ENCODE measurements at regions of chr1 and their contacts with region 1.

Region 1: DNA sequence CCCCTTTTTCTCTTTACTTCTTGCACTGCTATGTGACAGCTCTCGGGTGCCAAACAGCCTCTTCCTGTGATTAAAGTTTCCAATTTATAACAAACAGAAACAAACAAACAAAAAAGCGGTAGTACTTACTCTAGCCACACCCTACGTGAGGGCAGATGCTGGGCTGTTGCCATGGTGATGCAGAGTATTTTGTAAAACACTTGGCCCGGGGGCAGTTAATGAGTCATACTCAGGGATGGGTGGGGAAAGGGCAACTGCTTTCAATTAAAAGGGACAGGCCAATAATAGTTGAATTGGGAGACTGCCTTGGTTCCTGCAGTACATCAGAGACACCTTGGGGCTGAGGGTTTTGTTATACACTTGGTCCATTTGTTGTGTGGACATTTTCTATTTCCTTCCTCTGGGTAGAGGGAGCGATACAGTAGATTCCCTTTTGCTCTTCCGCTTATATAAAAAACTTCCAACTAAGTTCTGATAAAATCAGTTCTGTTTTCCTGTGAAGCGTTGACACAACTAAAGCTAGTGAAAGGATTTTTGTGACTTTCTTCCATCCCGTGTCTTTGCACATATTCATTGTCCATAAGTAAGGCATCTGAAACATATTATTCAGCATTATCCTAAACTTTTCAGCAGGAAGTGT is 36.5 kb upstream of the THEM4 start:
- DNase-seq: peak; percentile 88
- H3K4me3 Mint-ChIP-seq: peak overlapping the region; percentile 60
- H3K27ac Mint-ChIP-seq: peak overlapping the region; percentile 87
- H3K4me1 Mint-ChIP-seq: peaks cover 54% of the 10 kb centered on the region
- H3K27me3 Mint-ChIP-seq: no peaks in the 10 kb centered on the region

Region 2: GRCh38 chr1:151611832-151612500 is 333.9 kb before region 1 on chr1 and contains the start of gene SNX27:
- CTCF ChIA-PET with region 1: no interaction called
- POLR2A ChIA-PET with region 1: no interaction called
- intact Hi-C with region 1: loop called (anchors 10 kb)
- DNase-seq: peak; percentile 93
- H3K4me3 Mint-ChIP-seq: peak within 1 kb of the TSS; percentile 94
- H3K27ac Mint-ChIP-seq: peak within 1 kb of the TSS; percentile 79
- H3K4me1 Mint-ChIP-seq: peaks cover 49% of the 10 kb centered on the region
- H3K27me3 Mint-ChIP-seq: peaks cover 1% of the 10 kb centered on the region
- total RNA-seq, gene SNX27: 27.1 to 30.7 TPM

Region 3: GRCh38 chr1:151968058-151968457 is 22.2 kb after region 1 on chr1:
- CTCF ChIA-PET with region 1: interaction called, 13 read pairs
- POLR2A ChIA-PET with region 1: interaction called, 4 read pairs
- intact Hi-C with region 1: loop called (anchors 1 kb)
- DNase-seq: peak; percentile 55
- H3K4me3 Mint-ChIP-seq: no peak overlapping the region
- H3K27ac Mint-ChIP-seq: no peak overlapping the region
- H3K4me1 Mint-ChIP-seq: peaks cover 19% of the 10 kb centered on the region
- H3K27me3 Mint-ChIP-seq: no peaks in the 10 kb centered on the region

Region 4: DNA sequence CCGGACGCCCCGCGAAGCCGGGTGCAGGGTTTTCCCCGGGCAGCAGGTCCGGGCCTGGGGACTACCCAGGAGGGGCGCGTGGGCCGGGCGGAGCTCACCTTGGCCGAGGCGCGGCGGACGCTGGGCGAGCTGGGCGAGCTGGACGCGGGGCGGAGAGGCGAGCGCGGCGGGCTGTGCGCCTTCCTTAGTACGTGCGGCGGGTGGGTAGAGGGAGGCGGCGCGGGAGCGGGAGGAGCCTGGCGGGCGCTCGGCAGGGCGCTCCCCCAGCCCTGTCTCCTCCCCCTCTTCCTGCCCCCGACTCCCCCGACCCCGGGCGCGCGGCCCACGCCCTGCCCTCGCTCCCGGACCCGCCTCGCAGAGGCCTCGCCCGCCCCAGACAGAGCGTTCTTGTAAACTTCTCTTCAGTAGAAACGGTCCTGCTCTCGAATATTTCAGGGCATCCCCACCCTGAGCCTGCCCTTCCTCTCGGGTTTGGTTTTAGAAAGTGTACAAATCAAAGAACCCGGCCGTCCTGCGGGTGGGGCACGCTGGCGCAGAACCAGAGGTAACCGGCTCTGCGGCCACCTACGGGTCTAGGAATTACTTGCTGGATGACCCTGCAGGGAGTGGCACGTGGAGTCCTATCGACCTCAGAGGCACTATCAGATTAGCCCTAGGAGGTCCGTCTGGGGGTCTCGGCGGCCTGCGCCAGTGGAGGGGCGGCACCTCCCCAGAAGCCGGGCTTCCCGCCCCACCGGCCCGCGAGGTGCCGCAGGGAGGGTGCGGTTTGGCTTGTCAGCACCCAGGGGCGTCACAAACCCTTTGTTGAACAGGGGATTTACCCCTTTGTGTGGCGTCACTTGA is 48.0 kb after region 1 on chr1 and contains the start of gene S100A10:
- CTCF ChIA-PET with region 1: interaction called, 377 read pairs
- POLR2A ChIA-PET with region 1: interaction called, 12 read pairs
- intact Hi-C with region 1: no loop called
- DNase-seq: peak; percentile 83
- H3K4me3 Mint-ChIP-seq: peak within 1 kb of the TSS; percentile 94
- H3K27ac Mint-ChIP-seq: peak within 1 kb of the TSS; percentile 90
- H3K4me1 Mint-ChIP-seq: peaks cover 47% of the 10 kb centered on the region
- H3K27me3 Mint-ChIP-seq: no peaks in the 10 kb centered on the region
- total RNA-seq, gene S100A10: 257 to 270 TPM

Region 5: DNA sequence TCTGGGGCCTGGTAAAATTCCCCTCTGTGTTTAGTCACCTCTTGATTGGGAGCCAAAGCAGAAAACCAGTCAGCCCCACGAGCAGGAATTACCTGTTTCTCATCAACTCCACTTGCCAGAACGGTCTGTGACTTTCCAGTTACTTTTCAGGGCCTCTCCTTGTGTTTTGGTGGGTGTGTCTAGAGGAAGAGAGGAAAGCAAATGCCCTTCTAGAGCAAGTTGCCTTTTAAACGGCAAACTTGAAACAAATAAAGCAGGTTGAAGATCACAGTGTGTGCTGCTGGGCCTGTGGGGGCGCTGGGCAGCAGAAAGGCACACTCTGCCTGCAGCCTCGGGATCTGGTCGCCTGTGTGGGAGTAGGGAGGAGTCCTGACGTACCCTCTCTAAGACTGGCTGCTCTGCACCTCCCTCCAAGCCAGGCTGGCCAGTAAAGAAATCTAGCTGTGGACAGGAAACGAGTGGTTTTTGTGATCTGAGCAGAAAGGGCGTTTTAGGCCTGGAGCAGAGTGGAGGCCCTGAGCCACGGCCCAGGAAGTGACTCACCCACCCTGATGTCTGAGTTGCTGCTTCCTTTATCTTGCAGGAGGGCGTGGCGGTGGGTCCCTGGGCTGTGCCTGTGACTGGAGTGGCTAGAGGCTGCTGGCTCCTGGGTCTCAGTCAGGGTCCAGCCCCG is 102.0 kb after region 1 on chr1:
- CTCF ChIA-PET with region 1: interaction called, 3 read pairs
- POLR2A ChIA-PET with region 1: interaction called, 3 read pairs
- intact Hi-C with region 1: loop called (anchors 1 kb)
- DNase-seq: peak; percentile 94
- H3K4me3 Mint-ChIP-seq: peak overlapping the region; percentile 72
- H3K27ac Mint-ChIP-seq: peak overlapping the region; percentile 99
- H3K4me1 Mint-ChIP-seq: peaks cover 29% of the 10 kb centered on the region
- H3K27me3 Mint-ChIP-seq: peaks cover 2% of the 10 kb centered on the region

Measured in activated CD4-positive, alpha-beta memory T cell treated with anti-CD3 and anti-CD28 coated beads for 36 hours (primary cell).